ENCODE measurements at regions of chr1 and their contacts with region 1.

Region 1: DNA sequence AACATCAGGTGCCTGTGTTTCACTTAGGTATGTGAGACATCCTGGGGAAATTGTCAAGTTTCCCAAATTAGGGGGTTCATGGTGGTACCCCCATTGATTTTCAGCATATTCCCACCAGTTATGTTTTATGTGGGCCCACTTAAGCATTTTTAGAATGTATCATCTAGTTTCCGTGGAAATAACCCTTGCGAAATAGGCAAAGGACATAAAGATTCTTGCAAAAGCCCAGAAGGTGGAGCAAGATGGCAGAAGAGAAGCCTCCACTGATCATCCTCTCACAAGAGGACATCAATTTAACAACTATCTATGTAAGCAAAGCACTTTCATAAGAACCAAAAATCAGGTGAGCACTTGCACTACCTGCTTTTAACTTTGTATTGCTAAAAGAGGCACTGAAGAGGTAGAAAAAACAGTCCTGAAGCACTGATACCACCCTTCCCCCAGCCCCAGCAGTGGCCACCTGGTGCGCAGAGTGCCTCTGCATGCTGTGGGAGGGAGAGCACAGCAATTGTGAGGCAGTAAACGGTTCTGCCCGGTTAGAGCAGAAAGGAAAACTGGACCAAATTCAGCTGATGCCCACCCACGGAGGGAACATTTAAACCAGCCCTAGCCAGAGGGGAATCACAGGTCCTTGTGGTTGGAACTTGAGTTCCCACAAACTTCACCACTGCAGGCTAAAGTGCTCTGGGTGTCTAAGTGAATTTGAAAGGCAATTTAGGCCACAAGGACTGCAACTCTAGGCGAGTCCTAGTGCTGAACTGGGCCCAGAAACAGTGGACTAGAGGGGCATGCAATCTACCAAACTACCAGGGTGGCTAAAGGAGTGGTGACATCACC is 23.2 kb downstream of the MCOLN2 start:
- DNase-seq: peak; percentile 37
- H3K4me3 Mint-ChIP-seq: no peak overlapping the region
- H3K27ac Mint-ChIP-seq: peak overlapping the region; percentile 55
- H3K4me1 Mint-ChIP-seq: peaks cover 76% of the 10 kb centered on the region
- H3K27me3 Mint-ChIP-seq: no peaks in the 10 kb centered on the region

Region 2: DNA sequence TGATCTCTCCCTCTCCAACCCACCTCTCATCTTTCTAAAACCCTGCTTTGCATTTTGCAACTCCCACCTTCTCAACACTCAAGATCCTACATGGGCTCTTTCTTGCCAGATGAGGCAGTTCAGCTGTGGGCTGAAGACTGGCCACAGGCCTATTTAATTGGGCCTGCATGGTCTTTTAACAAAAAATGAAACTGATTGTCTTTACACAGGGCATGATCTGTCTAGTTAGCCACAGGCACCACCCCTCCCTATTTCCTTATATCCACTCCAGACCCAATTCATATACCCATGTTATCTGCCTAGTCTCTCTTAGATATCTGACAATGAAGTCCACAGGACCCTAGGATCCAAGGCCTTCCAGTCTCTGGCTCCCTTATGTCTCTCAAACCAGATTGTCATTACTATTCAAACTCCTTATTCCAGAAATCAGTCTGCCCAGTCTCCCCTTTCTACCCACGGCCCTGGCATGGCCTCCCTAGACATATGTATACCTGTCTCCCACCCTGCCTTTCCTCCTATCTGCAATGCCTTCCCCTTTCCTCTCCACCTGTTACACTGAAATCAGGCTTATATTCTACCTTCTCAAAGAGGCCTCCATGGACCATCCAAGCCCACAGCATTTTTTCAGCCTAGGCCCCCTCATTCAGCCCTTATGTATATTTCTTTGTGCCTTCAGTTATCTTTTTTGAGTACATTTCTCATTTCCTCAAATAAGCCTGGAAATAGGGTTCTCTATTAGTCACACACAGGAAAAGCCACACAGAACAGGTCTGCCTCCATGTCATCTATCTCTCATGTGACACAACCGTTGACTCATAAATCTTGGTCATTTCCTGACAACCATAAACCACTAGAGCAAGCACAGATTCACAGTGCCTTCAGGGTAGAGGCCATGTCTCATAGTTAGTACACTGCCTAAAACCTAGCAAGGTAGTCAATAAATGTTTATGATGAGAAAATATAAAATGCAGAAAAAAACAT is 119.7 kb before region 1 on chr1:
- CTCF ChIA-PET with region 1: no interaction called
- POLR2A ChIA-PET with region 1: no interaction called
- intact Hi-C with region 1: no loop called
- DNase-seq: peak; percentile 54
- H3K4me3 Mint-ChIP-seq: peak overlapping the region; percentile 4
- H3K27ac Mint-ChIP-seq: peak overlapping the region; percentile 32
- H3K4me1 Mint-ChIP-seq: peaks cover 29% of the 10 kb centered on the region
- H3K27me3 Mint-ChIP-seq: no peaks in the 10 kb centered on the region

Region 3: DNA sequence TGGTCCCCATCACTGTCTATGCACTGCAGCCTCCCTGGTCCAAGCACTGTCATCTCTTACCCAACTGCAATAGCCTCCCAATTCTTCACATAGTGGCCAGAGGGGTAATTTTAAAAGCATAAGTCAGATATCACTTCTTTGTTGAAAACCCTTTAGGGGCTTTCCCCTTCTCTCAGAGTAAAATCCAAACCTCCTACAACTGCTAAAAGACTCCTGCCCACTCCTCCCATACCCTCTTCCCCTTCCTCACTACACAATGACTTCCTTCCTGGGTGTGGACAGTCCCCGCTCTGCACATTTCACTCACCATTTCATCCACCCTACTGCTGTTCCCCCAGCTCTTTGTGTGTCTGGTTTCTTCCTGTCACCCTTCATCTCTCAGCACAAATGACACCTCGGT is 14.9 kb after region 1 on chr1:
- CTCF ChIA-PET with region 1: interaction called, 3 read pairs
- POLR2A ChIA-PET with region 1: interaction called, 25 read pairs
- intact Hi-C with region 1: loop called (anchors 1 kb)
- DNase-seq: peak; percentile 59
- H3K4me3 Mint-ChIP-seq: peak overlapping the region; percentile 28
- H3K27ac Mint-ChIP-seq: peak overlapping the region; percentile 40
- H3K4me1 Mint-ChIP-seq: peaks cover 52% of the 10 kb centered on the region
- H3K27me3 Mint-ChIP-seq: no peaks in the 10 kb centered on the region

Region 4: GRCh38 chr1:85027242-85027983 is 53.7 kb after region 1 on chr1:
- CTCF ChIA-PET with region 1: interaction called, 6 read pairs
- POLR2A ChIA-PET with region 1: no interaction called
- intact Hi-C with region 1: loop called (anchors 2 kb)
- DNase-seq: peak; percentile 25
- H3K4me3 Mint-ChIP-seq: no peak overlapping the region
- H3K27ac Mint-ChIP-seq: no peak overlapping the region
- H3K4me1 Mint-ChIP-seq: peaks cover 12% of the 10 kb centered on the region
- H3K27me3 Mint-ChIP-seq: no peaks in the 10 kb centered on the region

Measured in activated CD4-positive, alpha-beta memory T cell treated with anti-CD3 and anti-CD28 coated beads for 36 hours (primary cell).